K562 (cell line): ENCODE measurements at regions of chr6 and their contacts with region 1.

Region 1: GRCh38 chr6:30877419-30878371 is 6.6 kb upstream of the DDR1 start:
- DNase-seq: peak; percentile 75 to 97 (median 82)
- ATAC-seq: peak; percentile 78
- H3K4me3 ChIP-seq: peak overlapping the region; percentile 2; the same call in 1 of the 2 replicates
- H3K27ac ChIP-seq: peak overlapping the region; percentile 94
- H3K4me1 ChIP-seq: peaks cover 65 to 70% of the 10 kb centered on the region in 2 experiments
- H3K27me3 ChIP-seq: no peaks in the 10 kb centered on the region
- CTCF ChIP-seq: peak; percentile 96 to 99 (median 98)
- EP300 ChIP-seq: peak; percentile 70
- POLR2A ChIP-seq: no peak
- RAD21 ChIP-seq: peak; percentile 98 to 99

Region 2: DNA sequence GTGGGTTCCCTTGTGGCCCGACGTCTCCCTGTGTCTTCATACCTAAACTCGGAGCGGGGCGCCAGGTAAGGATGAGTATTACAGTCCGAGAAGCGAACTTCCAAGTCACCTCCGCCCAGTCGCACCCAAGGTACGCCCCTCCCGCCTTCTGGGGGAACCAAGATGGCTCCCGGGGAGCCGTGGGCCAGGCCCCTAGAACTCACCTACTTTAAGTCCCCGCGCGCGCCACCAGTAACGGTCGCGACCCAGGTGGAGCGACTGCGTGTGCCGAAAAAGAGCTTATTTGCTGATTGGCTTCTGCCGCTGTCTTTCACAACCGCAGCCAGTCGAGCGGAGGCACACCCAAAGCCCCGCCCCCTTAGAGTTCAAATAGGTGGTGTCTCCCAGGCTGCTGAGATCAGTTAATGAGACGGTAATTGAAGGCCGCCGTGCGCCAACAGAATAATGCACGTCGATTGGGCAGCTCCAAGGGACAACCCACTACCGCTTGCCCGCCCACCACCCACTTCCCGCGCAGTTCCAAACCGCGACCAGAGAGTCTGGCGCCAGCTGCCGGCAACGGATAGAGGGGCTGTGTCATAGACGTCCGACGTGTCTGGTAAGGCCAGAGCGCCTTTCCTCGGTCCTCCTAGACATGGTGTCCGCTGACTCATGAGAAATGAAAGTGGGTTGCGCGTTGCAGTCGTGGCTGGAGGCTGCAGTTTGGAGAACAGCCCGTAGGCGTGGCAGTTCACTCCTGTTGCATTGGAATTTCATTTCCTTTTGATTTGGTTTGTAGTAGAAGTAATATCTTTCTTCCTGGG is 160.5 kb before region 1 on chr6 and contains the start of gene MDC1:
- CTCF ChIA-PET with region 1: interaction called, 3 read pairs
- POLR2A ChIA-PET with region 1: interaction called, 4 read pairs
- in situ Hi-C with region 1: no loop called
- intact Hi-C with region 1: loop called (anchors 2 kb)
- DNase-seq: peak; percentile 96 to 100 (median 98)
- ATAC-seq: peak; percentile 78
- H3K4me3 ChIP-seq: peak within 1 kb of the TSS; percentile 56
- H3K27ac ChIP-seq: peak within 1 kb of the TSS; percentile 98
- H3K4me1 ChIP-seq: peaks cover 7 to 15% of the 10 kb centered on the region in 2 experiments
- H3K27me3 ChIP-seq: no peaks in the 10 kb centered on the region
- CTCF ChIP-seq: peak in 2 of 3 experiments; percentile 38 to 52; a peak in 3 of 6 replicates
- EP300 ChIP-seq: peak; percentile 84
- POLR2A ChIP-seq: peak; percentile 91
- RAD21 ChIP-seq: peak; percentile 24 to 32; a peak in 3 of 4 replicates
- polyA plus RNA-seq, gene MDC1: 8.2 to 8.8 TPM

Region 3: GRCh38 chr6:30821862-30822782 is 55.6 kb before region 1 on chr6:
- CTCF ChIA-PET with region 1: interaction called, 45 read pairs
- POLR2A ChIA-PET with region 1: interaction called, 8 read pairs
- in situ Hi-C with region 1: no loop called
- intact Hi-C with region 1: no loop called
- DNase-seq: peak; percentile 51 to 84 (median 59)
- ATAC-seq: peak; percentile 76
- H3K4me3 ChIP-seq: no peak overlapping the region
- H3K27ac ChIP-seq: peak overlapping the region; percentile 20; the same call in 2 of the 3 replicates
- H3K4me1 ChIP-seq: peaks cover 15 to 36% of the 10 kb centered on the region in 2 experiments
- H3K27me3 ChIP-seq: no peaks in the 10 kb centered on the region
- CTCF ChIP-seq: peak; percentile 51 to 84 (median 70); a peak in 5 of 6 replicates
- EP300 ChIP-seq: 0 out of 2 replicates have a peak, but pooled peaks have one; percentile 13
- POLR2A ChIP-seq: no peak
- RAD21 ChIP-seq: peak; percentile 69 to 72

Region 4: GRCh38 chr6:30857549-30857948 is 20.1 kb before region 1 on chr6:
- CTCF ChIA-PET with region 1: no interaction called
- POLR2A ChIA-PET with region 1: interaction called, 12 read pairs
- in situ Hi-C with region 1: no loop called
- intact Hi-C with region 1: no loop called
- DNase-seq: peak in 1 of 4 experiments; percentile 4
- ATAC-seq: no peak
- H3K4me3 ChIP-seq: no peak overlapping the region
- H3K27ac ChIP-seq: no peak overlapping the region
- H3K4me1 ChIP-seq: no peaks in the 10 kb centered on the region; a peak in 1 of 5 replicates
- H3K27me3 ChIP-seq: no peaks in the 10 kb centered on the region
- CTCF ChIP-seq: no peak
- EP300 ChIP-seq: no peak
- POLR2A ChIP-seq: no peak
- RAD21 ChIP-seq: no peak

Region 5: DNA sequence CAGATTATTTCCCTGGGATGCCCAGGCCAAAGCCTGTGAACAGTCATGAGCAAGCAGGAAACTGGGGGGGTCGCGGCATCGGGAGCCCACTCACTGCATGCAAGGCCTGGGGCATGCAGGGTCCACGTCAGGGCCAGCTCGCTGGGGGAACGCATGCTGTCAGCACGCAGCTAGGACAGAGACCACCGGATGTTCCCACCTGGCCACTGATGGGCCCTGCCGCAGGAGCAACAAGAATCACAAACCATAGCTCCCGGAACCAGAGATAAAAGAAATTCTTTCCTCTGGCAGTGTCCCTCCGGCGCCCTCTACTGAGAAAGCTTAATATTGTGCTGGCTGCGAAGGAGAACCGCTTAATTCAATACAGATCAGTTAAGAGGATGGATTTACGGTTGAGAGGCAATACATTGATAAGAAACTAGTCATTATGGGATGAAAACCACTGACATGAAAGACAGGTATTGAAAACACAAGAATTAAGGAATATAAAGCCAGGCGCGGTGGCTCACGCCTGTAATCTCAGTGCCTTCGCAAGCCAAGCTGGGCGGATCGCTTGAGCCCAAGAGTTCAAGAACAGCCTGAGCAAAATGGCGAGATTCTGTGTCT is 202.1 kb after region 1 on chr6:
- CTCF ChIA-PET with region 1: no interaction called
- POLR2A ChIA-PET with region 1: interaction called, 3 read pairs
- in situ Hi-C with region 1: no loop called
- intact Hi-C with region 1: loop called (anchors 5 kb)
- DNase-seq: peak; percentile 43 to 79 (median 56)
- ATAC-seq: peak; percentile 80
- H3K4me3 ChIP-seq: no peak overlapping the region
- H3K27ac ChIP-seq: no peak overlapping the region
- H3K4me1 ChIP-seq: peaks cover 6% of the 10 kb centered on the region in 2 experiments; a peak in 4 of 5 replicates
- H3K27me3 ChIP-seq: no peaks in the 10 kb centered on the region
- CTCF ChIP-seq: peak; percentile 85 to 95 (median 89)
- EP300 ChIP-seq: 0 out of 2 replicates have a peak, but pooled peaks have one; percentile 44
- POLR2A ChIP-seq: no peak
- RAD21 ChIP-seq: peak; percentile 66 to 84